ENCODE measurements at regions of chr9 and their contacts with region 1.

Region 1: DNA sequence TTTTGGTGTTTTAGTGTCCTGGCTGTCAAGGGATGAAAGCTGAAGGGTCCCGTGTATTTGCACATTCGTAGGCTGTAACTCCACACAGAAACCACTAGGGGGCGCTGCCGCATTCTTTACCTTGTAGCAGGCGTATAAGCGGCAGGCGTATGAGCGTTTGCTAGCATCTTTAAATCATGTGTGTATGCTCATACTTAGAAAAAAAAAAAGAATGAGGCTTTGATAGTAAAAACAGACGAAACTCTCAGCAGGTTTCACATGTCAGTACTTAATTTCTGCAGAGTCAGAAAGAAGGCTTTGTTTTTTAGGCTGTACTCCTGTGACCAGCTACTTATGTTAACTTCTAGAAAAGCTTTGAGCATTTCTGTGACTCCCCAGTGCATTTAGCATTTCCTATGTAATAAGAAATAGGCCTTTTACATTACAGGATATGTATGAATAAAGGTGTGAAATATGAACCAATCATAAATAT is 218.8 kb upstream of the ADAMTSL1 start:
- DNase-seq: peak; percentile 79
- ATAC-seq: peak; percentile 84 to 88
- H3K4me3 ChIP-seq: no peak overlapping the region
- H3K27ac ChIP-seq: no peak overlapping the region
- H3K4me1 ChIP-seq: no peaks in the 10 kb centered on the region
- H3K27me3 ChIP-seq: no peaks in the 10 kb centered on the region
- CTCF ChIP-seq: peak; percentile 87

Region 2: DNA sequence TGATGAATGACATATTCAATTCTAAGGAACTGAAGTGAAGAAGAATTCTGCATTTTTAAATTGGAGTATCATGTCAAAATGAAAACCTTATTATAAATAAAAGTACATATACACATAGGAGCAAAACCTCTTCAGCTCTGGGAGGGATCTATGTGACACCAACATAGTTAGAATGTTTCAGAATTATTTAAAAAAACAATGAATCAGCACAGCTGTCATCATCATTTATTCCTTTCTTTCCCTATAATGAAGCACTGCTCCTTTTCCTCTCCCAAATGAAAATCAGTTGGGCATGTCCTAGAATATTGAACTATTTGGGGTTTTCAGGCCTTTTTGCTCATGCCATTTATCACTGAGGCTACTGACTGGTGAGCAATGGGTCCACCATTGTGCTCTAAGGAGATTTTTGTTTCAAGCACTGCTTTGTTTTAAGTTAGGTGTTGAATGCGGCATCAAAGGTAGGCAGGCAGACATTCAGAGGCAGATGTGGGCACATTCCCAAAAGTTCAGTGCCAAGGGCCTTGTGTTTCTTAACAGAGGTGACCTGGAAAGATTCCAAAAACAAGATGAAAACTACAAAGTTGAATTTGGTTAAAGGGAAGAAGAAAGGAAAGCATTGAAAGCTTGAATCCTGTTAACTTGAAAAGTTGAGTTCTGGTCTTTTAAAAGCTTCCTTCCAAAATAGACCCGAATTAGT is 92.3 kb after region 1 on chr9:
- intact Hi-C with region 1: no loop called
- DNase-seq: no peak
- ATAC-seq: no peak
- H3K4me3 ChIP-seq: no peak overlapping the region
- H3K27ac ChIP-seq: no peak overlapping the region
- H3K4me1 ChIP-seq: no peaks in the 10 kb centered on the region
- H3K27me3 ChIP-seq: no peaks in the 10 kb centered on the region
- CTCF ChIP-seq: no peak

Region 3: GRCh38 chr9:19028835-19029451 is 773.7 kb after region 1 on chr9:
- intact Hi-C with region 1: loop called (anchors 10 kb)
- DNase-seq: no peak
- ATAC-seq: peak; percentile 60 to 81
- H3K4me3 ChIP-seq: no peak overlapping the region
- H3K27ac ChIP-seq: no peak overlapping the region
- H3K4me1 ChIP-seq: no peaks in the 10 kb centered on the region
- H3K27me3 ChIP-seq: no peaks in the 10 kb centered on the region
- CTCF ChIP-seq: peak; percentile 79

Measured in lower lobe of right lung (tissue), 2 donors.